ENCODE measurements at regions of chr20 and their contacts with region 1.

Region 1: GRCh38 chr20:59222253-59223181 is 58.9 kb downstream of the ZNF831 start:
- DNase-seq: peak; percentile 84
- H3K4me3 ChIP-seq: peak overlapping the region; percentile 41 to 64
- H3K27ac ChIP-seq: peak overlapping the region in 1 of 2 donors; percentile 57
- H3K4me1 ChIP-seq: peaks cover 16% of the 10 kb centered on the region
- H3K27me3 ChIP-seq: no peaks in the 10 kb centered on the region
- CTCF ChIP-seq: peak; percentile 63 to 92 (median 76)
- POLR2A ChIP-seq: no peak

Region 2: DNA sequence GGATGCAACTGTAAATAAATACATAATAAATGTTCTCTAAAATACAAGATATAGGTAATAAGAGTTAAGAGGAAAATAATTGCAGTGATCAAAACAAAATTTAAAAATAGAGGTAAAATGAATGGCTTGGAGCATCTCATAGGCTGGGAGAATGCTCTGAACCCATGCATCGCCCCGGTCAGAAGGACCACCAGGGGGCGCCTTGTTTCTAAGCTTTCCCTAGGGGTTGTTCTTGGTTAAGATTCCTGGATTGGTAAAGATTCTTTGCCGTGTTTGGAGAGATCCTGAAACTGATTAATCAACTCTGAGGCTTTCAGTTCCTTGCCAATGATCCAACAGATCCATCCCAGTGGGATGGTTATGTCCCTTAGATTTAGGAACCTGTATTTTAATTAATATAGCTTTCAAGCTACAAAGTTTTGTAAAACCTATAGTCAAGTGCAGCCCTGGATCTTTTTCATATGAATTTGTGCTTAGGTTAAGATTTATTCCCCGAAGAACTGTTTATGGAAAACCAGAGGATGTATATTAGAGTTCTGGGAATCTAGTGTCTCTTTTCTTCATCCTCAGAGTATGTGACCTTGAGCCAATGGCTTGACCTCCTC is 134.6 kb before region 1 on chr20:
- intact Hi-C with region 1: loop called (anchors 5 kb)
- DNase-seq: peak; percentile 93
- H3K4me3 ChIP-seq: no peak overlapping the region
- H3K27ac ChIP-seq: no peak overlapping the region
- H3K4me1 ChIP-seq: no peaks in the 10 kb centered on the region
- H3K27me3 ChIP-seq: no peaks in the 10 kb centered on the region
- CTCF ChIP-seq: peak; percentile 81 to 93 (median 83)
- POLR2A ChIP-seq: no peak

Region 3: DNA sequence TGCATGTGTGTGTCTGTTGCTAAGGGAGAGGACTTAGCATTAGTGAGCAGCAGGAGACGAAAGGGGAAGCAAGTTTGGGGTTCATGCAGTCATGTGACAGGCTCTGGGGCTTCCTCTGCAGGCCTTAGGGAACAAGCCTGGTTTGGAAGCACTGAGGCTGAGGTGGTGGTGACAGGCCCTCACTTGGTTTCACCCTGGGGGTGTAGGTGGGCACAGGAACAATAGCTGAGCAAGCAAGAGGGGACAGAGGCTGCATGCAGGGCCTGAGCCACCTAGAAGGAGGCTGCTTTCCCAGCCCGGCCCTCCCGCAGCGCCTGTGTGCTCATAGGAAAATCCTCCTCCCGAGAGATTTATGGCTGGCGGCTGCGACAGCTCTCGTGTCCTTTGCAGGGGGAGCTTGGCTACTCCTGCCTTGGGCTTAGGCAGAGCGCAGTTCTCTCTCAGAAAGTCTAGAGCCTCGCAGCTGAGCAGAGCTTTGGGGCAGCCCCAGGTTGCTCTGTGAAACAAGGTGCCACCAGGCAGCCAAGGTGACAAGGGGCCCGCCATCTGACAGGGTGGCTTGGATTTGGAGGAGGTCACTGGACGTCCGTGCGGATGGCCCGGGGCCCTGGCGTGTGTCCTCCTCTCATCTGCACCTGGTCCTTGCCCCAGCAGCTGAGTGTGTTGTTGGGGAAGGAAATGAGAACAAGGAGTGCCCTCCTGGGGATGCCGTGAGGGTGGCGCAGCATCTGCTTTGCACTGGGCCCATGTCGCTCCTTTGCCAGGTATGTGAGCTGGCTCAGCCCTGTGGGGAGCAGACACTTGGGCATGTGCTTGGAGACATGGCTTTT is 119.5 kb after region 1 on chr20:
- intact Hi-C with region 1: no loop called
- DNase-seq: no peak
- H3K4me3 ChIP-seq: no peak overlapping the region
- H3K27ac ChIP-seq: no peak overlapping the region
- H3K4me1 ChIP-seq: no peaks in the 10 kb centered on the region
- H3K27me3 ChIP-seq: no peaks in the 10 kb centered on the region
- CTCF ChIP-seq: no peak
- POLR2A ChIP-seq: no peak